Heart right ventricle (tissue), 16 donors: ENCODE measurements at regions of chr13 and their contacts with region 1.

Region 1: DNA sequence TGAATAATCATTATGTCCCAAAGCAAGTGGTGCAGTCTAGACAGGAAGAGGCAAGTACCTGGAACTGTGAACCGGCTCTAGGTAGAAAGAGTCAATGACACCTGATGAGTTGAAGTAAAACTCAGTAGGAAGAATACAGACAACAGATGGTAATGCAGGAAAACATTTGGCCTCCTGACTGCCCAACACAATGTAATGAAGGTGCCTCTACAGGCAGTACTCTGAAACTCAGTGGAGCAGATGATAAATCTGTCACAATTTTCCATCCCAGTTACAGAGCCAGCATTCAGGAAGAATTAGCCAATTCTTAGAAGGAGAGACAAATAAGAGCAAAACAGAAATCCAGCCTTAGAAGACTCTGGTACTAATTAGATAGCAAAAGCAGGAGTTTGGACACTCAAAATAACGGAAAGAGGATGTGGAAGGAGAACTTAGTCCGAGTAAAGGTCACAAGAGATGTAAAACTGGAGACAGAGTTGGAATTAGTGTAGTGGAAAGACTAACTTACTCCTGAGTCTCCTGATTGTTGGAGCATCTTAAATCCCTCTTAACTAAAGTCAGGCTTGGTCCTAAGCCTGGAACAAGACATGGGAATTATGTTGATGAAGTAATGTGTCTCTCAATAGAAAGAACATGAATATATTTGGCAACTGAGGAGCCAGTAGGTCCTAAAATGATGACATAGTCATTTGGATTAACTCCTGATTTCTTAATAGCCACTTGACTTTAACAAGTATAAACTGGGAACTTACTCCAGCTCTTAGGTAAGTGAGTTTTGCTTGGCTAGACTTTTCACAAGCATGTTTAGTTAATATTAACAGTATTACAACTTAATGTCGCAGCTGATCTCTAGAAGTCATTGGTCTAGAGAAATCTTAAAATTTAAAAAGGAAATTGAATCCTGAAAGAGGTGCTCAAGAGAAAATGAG is 457.3 kb upstream of the MIR17HG start:
- DNase-seq: no peak
- ATAC-seq: no peak
- H3K4me3 ChIP-seq: no peak overlapping the region
- H3K27ac ChIP-seq: no peak overlapping the region
- H3K4me1 ChIP-seq: no peaks in the 10 kb centered on the region
- H3K27me3 ChIP-seq: no peaks in the 10 kb centered on the region
- CTCF ChIP-seq: no peak

Region 2: DNA sequence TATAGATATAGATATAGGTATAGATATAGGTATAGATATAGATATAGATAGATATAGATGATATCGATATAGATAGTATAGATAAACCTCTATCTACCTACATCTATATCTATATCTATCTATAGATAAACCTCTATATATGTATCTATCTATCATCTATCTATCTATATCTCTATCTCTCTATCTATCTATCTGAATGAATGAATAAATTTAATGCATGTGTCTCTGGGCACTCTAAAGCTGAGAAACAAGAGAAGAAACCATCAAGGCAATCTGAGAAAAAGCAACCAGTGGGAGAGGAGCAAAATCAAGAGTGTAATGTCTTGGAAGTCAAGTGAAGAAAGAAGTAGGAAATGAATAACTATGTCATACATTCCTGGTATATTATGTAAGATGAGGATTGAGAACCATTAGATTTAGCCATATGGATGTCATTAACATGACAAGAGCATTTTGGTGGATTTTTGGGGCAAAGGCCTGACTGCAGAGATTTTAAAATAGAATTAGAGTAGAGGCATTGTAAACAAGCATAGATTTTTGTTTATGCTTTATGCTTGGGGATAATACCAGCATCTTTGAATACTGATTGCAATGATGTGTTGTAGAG is 805.4 kb before region 1 on chr13:
- intact Hi-C with region 1: no loop called
- DNase-seq: no peak
- ATAC-seq: no peak
- H3K4me3 ChIP-seq: no peak overlapping the region
- H3K27ac ChIP-seq: no peak overlapping the region
- H3K4me1 ChIP-seq: no peaks in the 10 kb centered on the region
- H3K27me3 ChIP-seq: no peaks in the 10 kb centered on the region
- CTCF ChIP-seq: no peak

Region 3: DNA sequence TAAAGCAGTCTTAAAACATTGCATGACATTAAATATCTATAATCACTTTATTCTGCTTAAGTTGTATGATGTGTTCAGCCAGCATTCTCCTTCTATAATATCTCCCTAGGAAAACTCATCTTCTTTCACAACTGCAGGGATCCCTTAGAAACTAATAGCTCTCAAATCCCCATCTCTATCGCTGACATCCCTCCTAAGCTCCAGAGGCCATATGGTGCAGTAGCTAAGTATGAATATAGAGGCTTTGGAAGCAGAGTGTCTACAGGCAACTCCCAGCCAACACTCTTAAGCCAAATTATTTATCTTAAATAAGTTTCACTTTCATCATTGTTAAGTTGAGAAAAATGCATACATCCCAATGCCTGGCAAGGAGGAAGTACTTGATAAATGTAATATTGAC is 107.8 kb after region 1 on chr13:
- intact Hi-C with region 1: no loop called
- DNase-seq: no peak
- ATAC-seq: no peak
- H3K4me3 ChIP-seq: no peak overlapping the region
- H3K27ac ChIP-seq: no peak overlapping the region
- H3K4me1 ChIP-seq: no peaks in the 10 kb centered on the region
- H3K27me3 ChIP-seq: peaks cover 0 to 4% (median 0%) of the 10 kb centered on the region in 7 donors
- CTCF ChIP-seq: no peak

Region 4: GRCh38 chr13:91348906-91349435 is 458.8 kb after region 1 on chr13:
- intact Hi-C with region 1: loop called in 1 of 10 experiments (anchors 5 kb)
- DNase-seq: peak; percentile 93 to 95
- ATAC-seq: peak; percentile 76 to 93 (median 88)
- H3K4me3 ChIP-seq: peak overlapping the region; percentile 4 to 97 (median 76)
- H3K27ac ChIP-seq: peak overlapping the region; percentile 79 to 99 (median 94)
- H3K4me1 ChIP-seq: peaks cover 4 to 39% (median 26%) of the 10 kb centered on the region in 9 donors
- H3K27me3 ChIP-seq: peaks cover 0 to 31% (median 0%) of the 10 kb centered on the region in 7 donors
- CTCF ChIP-seq: peak; percentile 86 to 98 (median 93)

Region 5: GRCh38 chr13:91965511-91965910 is 1075.3 kb after region 1 on chr13:
- intact Hi-C with region 1: no loop called
- DNase-seq: no peak
- ATAC-seq: no peak
- H3K4me3 ChIP-seq: no peak overlapping the region
- H3K27ac ChIP-seq: no peak overlapping the region
- H3K4me1 ChIP-seq: no peaks in the 10 kb centered on the region
- H3K27me3 ChIP-seq: no peaks in the 10 kb centered on the region
- CTCF ChIP-seq: no peak